Mammary epithelial cell (primary cell): ENCODE measurements at regions of chr4 and their contacts with region 1.

Region 1: DNA sequence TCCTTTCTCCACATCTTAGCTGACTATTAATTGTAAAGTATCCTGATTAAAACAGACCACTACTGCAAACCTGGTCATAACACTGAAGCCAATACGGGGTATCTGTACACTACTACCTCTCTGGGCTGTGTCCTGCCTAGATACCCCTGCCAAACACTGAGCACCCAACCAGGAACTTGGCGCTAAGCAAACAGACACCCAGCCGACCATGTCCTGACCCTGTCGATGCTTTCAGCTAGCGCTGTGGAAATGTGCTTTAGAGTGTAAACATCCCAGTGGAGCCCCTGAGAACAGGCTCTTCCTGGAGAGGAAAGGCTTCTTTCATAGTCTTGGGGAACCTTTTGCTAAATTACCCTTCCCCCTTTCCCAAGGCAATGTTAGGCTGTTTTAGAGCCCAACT is 52.9 kb downstream of the CCNG2 start:
- DNase-seq: no peak
- H3K4me3 ChIP-seq: no peak overlapping the region
- H3K27ac ChIP-seq: no peak overlapping the region
- H3K4me1 ChIP-seq: no peaks in the 10 kb centered on the region
- H3K27me3 ChIP-seq: no peaks in the 10 kb centered on the region
- CTCF ChIP-seq: no peak

Region 2: GRCh38 chr4:76960014-76960413 is 249.9 kb before region 1 on chr4:
- CTCF ChIA-PET with region 1: interaction called, 20 read pairs
- dilution Hi-C with region 1: no loop called
- in situ Hi-C with region 1: no loop called
- intact Hi-C with region 1: no loop called
- DNase-seq: no peak
- H3K4me3 ChIP-seq: no peak overlapping the region
- H3K27ac ChIP-seq: no peak overlapping the region
- H3K4me1 ChIP-seq: no peaks in the 10 kb centered on the region
- H3K27me3 ChIP-seq: no peaks in the 10 kb centered on the region
- CTCF ChIP-seq: no peak

Region 3: GRCh38 chr4:77074981-77075855 is 134.7 kb before region 1 on chr4:
- CTCF ChIA-PET with region 1: no interaction called
- dilution Hi-C with region 1: no loop called
- in situ Hi-C with region 1: no loop called
- intact Hi-C with region 1: no loop called
- DNase-seq: peak; percentile 76
- H3K4me3 ChIP-seq: peak overlapping the region; percentile 73 to 92 (median 83)
- H3K27ac ChIP-seq: peak overlapping the region; percentile 96
- H3K4me1 ChIP-seq: peaks cover 14% of the 10 kb centered on the region
- H3K27me3 ChIP-seq: no peaks in the 10 kb centered on the region
- CTCF ChIP-seq: no peak

Region 4: GRCh38 chr4:77126809-77127208 is 83.1 kb before region 1 on chr4:
- CTCF ChIA-PET with region 1: no interaction called
- dilution Hi-C with region 1: no loop called
- in situ Hi-C with region 1: no loop called
- intact Hi-C with region 1: no loop called
- DNase-seq: no peak
- H3K4me3 ChIP-seq: no peak overlapping the region
- H3K27ac ChIP-seq: no peak overlapping the region
- H3K4me1 ChIP-seq: no peaks in the 10 kb centered on the region
- H3K27me3 ChIP-seq: peaks cover 4% of the 10 kb centered on the region
- CTCF ChIP-seq: no peak

Region 5: GRCh38 chr4:77560170-77560569 is 350.2 kb after region 1 on chr4:
- CTCF ChIA-PET with region 1: no interaction called
- dilution Hi-C with region 1: no loop called
- in situ Hi-C with region 1: no loop called
- intact Hi-C with region 1: no loop called
- DNase-seq: no peak
- H3K4me3 ChIP-seq: no peak overlapping the region
- H3K27ac ChIP-seq: no peak overlapping the region
- H3K4me1 ChIP-seq: no peaks in the 10 kb centered on the region
- H3K27me3 ChIP-seq: no peaks in the 10 kb centered on the region
- CTCF ChIP-seq: no peak